ENCODE measurements at regions of chr19 and their contacts with region 1.

Region 1: GRCh38 chr19:48646001-48646721 is at the start of gene CA11:
- DNase-seq: peak; percentile 84
- H3K4me3 ChIP-seq: peak within 1 kb of the TSS; percentile 40 to 46 (median 46)
- H3K27ac ChIP-seq: no peak within 1 kb of the TSS
- H3K4me1 ChIP-seq: peaks cover 9% of the 10 kb centered on the region
- H3K27me3 ChIP-seq: peaks cover 0 to 2% of the 10 kb centered on the region in 2 experiments
- CTCF ChIP-seq: peak; percentile 68 to 89
- POLR2A ChIP-seq: no peak
- total RNA-seq, gene CA11: 2.8 TPM in 2 replicates

Region 2: DNA sequence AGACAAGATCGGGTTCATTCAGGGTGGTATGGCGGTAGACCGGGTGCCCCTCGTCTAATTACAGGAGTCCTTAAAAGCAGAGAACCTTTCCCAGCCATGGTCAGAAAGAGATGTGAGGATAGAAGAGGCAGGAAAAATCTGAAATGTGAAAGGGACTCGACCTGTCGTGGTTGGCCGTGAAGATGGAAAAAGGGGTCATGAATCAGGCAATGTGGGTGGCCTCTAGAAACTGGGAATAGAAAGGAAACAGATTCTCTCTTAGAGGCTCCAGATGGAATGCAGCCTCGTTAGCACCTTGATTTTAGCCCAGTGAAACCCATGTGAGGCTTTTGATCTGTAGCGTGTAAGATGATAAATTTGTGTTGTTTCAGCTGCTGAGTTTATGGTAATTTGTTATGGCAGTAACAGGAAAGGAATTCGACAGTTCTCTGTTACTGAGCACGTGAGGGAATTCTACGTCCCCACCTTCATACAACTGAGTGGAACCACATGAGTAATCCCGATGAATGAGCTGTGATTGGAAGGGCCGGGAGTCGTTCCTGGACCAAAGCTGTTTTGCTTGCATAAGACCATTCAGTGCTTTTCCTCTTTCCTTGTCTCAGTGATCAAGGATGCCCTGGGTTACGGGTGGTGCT is 10.8 kb after region 1 on chr19:
- CTCF ChIA-PET with region 1: interaction called, 16 read pairs
- POLR2A ChIA-PET with region 1: no interaction called
- dilution Hi-C with region 1: no loop called
- intact Hi-C with region 1: no loop called
- DNase-seq: peak; percentile 61
- H3K4me3 ChIP-seq: no peak overlapping the region
- H3K27ac ChIP-seq: no peak overlapping the region
- H3K4me1 ChIP-seq: peaks cover 2% of the 10 kb centered on the region
- H3K27me3 ChIP-seq: peaks cover 0 to 2% of the 10 kb centered on the region in 2 experiments
- CTCF ChIP-seq: no peak
- POLR2A ChIP-seq: no peak

Region 3: DNA sequence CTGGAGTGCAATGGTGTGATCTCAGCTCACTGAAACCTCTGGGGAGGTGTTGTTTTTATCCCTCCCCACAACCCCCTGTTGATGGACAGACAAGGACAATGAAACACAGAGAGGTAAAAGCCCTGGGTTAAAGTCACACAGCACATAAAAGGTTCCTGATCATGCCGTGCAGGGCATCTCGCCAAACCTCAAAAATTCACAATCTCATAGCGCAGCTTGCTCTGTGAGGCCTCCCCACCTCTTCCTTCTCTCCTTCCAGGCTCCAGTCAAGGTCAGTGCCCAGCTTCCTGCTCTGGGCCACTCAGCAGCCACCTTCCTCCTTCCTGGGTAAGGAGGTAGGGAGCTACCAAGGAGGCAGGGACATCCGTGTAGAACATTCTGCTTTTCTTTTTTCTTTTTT is 51.9 kb after region 1 on chr19:
- CTCF ChIA-PET with region 1: interaction called, 3 read pairs
- POLR2A ChIA-PET with region 1: interaction called, 10 read pairs
- dilution Hi-C with region 1: no loop called
- intact Hi-C with region 1: loop called (anchors 1 kb)
- DNase-seq: peak; percentile 60
- H3K4me3 ChIP-seq: no peak overlapping the region
- H3K27ac ChIP-seq: no peak overlapping the region
- H3K4me1 ChIP-seq: peaks cover 16% of the 10 kb centered on the region
- H3K27me3 ChIP-seq: no peaks in the 10 kb centered on the region
- CTCF ChIP-seq: no peak
- POLR2A ChIP-seq: no peak

Region 4: DNA sequence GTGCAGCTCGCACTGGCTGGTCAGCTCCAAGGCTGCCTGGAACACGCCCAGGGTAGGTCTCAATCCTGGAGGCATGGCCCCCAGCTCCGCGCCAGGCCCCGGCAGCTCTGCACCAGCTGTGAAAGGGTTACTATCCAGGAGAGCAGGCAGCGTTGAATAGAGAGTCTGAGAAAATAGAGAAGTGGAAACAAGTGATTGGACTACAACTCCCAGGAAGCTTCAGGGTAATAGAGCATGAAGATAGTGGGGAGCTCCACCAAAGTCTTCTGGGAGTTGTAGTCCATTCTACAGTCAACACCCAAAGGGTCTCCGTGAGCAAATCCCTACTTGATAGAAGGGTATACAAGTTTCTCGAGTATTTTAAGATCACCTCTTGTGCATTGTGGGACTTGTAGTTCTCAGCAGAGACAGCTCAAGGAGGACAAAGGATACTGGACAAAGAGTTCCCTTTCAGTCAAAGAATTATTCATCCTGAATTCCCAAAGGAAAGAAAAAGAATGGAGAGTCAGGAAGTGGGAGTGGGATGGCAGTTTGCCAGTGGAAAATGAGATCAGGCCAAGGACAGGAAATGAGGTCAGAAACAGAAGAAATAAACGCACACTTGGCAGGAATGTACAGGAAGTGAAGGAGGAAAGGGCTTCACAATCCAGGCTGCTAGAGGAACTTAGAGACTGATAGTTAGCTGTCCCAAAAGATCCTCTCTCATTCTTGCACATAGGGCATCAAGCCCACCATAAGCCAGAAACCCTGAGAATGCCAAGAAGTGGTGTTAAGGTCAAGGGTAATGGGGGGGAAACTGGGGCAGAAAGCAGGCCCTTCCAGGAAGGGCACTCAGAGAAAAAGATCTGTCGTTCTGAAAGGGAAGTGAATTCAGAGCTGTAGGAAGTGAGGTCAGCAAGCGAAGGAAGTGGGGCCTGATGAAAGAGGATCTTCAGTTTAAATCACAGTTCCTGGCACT is 78.9 kb after region 1 on chr19:
- CTCF ChIA-PET with region 1: interaction called, 11 read pairs
- POLR2A ChIA-PET with region 1: no interaction called
- dilution Hi-C with region 1: no loop called
- intact Hi-C with region 1: no loop called
- DNase-seq: peak; percentile 100
- H3K4me3 ChIP-seq: no peak overlapping the region
- H3K27ac ChIP-seq: peak overlapping the region; percentile 97
- H3K4me1 ChIP-seq: peaks cover 33% of the 10 kb centered on the region
- H3K27me3 ChIP-seq: no peaks in the 10 kb centered on the region
- CTCF ChIP-seq: no peak
- POLR2A ChIP-seq: no peak

Region 5: GRCh38 chr19:48780631-48781391 is 134.7 kb after region 1 on chr19:
- CTCF ChIA-PET with region 1: interaction called, 19 read pairs
- POLR2A ChIA-PET with region 1: no interaction called
- dilution Hi-C with region 1: no loop called
- intact Hi-C with region 1: no loop called
- DNase-seq: peak; percentile 43
- H3K4me3 ChIP-seq: no peak overlapping the region
- H3K27ac ChIP-seq: peak overlapping the region; percentile 53
- H3K4me1 ChIP-seq: peaks cover 9% of the 10 kb centered on the region
- H3K27me3 ChIP-seq: no peaks in the 10 kb centered on the region
- CTCF ChIP-seq: no peak
- POLR2A ChIP-seq: no peak

Region 6: GRCh38 chr19:48835734-48836088 is 189.6 kb after region 1 on chr19:
- CTCF ChIA-PET with region 1: interaction called, 20 read pairs
- POLR2A ChIA-PET with region 1: no interaction called
- dilution Hi-C with region 1: no loop called
- intact Hi-C with region 1: loop called (anchors 1 kb)
- DNase-seq: peak; percentile 87
- H3K4me3 ChIP-seq: peak overlapping the region; percentile 38 to 61 (median 57)
- H3K27ac ChIP-seq: peak overlapping the region; percentile 52
- H3K4me1 ChIP-seq: peaks cover 5% of the 10 kb centered on the region
- H3K27me3 ChIP-seq: no peaks in the 10 kb centered on the region
- CTCF ChIP-seq: peak; percentile 88 to 92
- POLR2A ChIP-seq: no peak